Transverse colon (tissue), 4 donors: ENCODE measurements at regions of chr11 and their contacts with region 1.

Region 1: GRCh38 chr11:28887681-28888080 is 779.5 kb downstream of the METTL15 start:
- DNase-seq: no peak
- H3K4me3 ChIP-seq: no peak overlapping the region
- H3K27ac ChIP-seq: no peak overlapping the region
- H3K4me1 ChIP-seq: no peaks in the 10 kb centered on the region
- H3K27me3 ChIP-seq: no peaks in the 10 kb centered on the region
- CTCF ChIP-seq: no peak
- EP300 ChIP-seq: no peak
- POLR2A ChIP-seq: no peak

Region 2: DNA sequence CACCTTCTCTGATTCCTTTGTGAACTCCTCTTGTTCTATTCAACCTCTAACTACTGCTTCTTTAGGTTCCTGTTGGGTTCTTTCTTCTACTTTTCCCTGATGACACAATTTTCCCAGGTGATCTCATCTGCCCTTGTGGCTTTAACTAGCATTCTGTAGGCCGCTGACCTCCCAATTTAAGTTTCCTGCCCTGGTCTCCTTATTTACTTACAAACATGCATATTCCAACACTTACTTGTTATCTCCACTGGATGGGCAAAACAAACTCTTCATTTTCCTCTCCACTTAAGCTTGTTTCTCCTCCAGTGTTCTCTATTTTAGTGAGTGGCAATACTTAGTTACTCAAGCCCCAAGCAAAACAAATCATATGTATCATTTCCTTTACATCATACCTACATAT is 45.0 kb before region 1 on chr11:
- in situ Hi-C with region 1: no loop called
- intact Hi-C with region 1: loop called (anchors 1 kb)
- DNase-seq: no peak
- H3K4me3 ChIP-seq: no peak overlapping the region
- H3K27ac ChIP-seq: no peak overlapping the region
- H3K4me1 ChIP-seq: no peaks in the 10 kb centered on the region
- H3K27me3 ChIP-seq: no peaks in the 10 kb centered on the region
- CTCF ChIP-seq: no peak
- EP300 ChIP-seq: no peak
- POLR2A ChIP-seq: no peak

Region 3: GRCh38 chr11:29075726-29076125 is 188.0 kb after region 1 on chr11:
- in situ Hi-C with region 1: no loop called
- intact Hi-C with region 1: no loop called
- DNase-seq: no peak
- H3K4me3 ChIP-seq: no peak overlapping the region
- H3K27ac ChIP-seq: no peak overlapping the region
- H3K4me1 ChIP-seq: no peaks in the 10 kb centered on the region
- H3K27me3 ChIP-seq: no peaks in the 10 kb centered on the region
- CTCF ChIP-seq: no peak
- EP300 ChIP-seq: no peak
- POLR2A ChIP-seq: no peak